ENCODE measurements at regions of chr1 and their contacts with region 1.

Region 1: GRCh38 chr1:118143831-118144230 is 41.2 kb downstream of the SPAG17 start:
- DNase-seq: no peak
- ATAC-seq: no peak
- H3K4me3 ChIP-seq: no peak overlapping the region
- H3K27ac ChIP-seq: no peak overlapping the region
- H3K4me1 ChIP-seq: no peaks in the 10 kb centered on the region
- H3K27me3 ChIP-seq: peaks cover 14% of the 10 kb centered on the region; the same call in 1 of the 2 replicates
- CTCF ChIP-seq: no peak
- POLR2A ChIP-seq: no peak
- RAD21 ChIP-seq: no peak

Region 2: GRCh38 chr1:118084400-118084799 is 59.4 kb before region 1 on chr1:
- CTCF ChIA-PET with region 1: no interaction called
- POLR2A ChIA-PET with region 1: no interaction called
- RAD21 ChIA-PET with region 1: no interaction called
- intact Hi-C with region 1: loop called (anchors 2 kb)
- DNase-seq: no peak
- ATAC-seq: no peak
- H3K4me3 ChIP-seq: no peak overlapping the region
- H3K27ac ChIP-seq: no peak overlapping the region
- H3K4me1 ChIP-seq: no peaks in the 10 kb centered on the region
- H3K27me3 ChIP-seq: peaks cover 22% of the 10 kb centered on the region; the same call in 1 of the 2 replicates
- CTCF ChIP-seq: no peak
- POLR2A ChIP-seq: no peak
- RAD21 ChIP-seq: no peak